ENCODE measurements at regions of chr4 and their contacts with region 1.

Region 1: GRCh38 chr4:70651864-70652506 is 14.3 kb downstream of the JCHAIN start:
- DNase-seq: no peak
- ATAC-seq: peak; percentile 67
- H3K4me3 Mint-ChIP-seq: no peak overlapping the region
- H3K27ac Mint-ChIP-seq: no peak overlapping the region
- H3K4me1 Mint-ChIP-seq: peaks cover 5% of the 10 kb centered on the region
- H3K27me3 Mint-ChIP-seq: no peaks in the 10 kb centered on the region
- CTCF ChIP-seq: no peak

Region 2: GRCh38 chr4:70704331-70705145 is 52.6 kb after region 1 on chr4:
- CTCF ChIA-PET with region 1: interaction called, 4 read pairs
- POLR2A ChIA-PET with region 1: interaction called, 4 read pairs
- intact Hi-C with region 1: loop called (anchors 1 kb)
- DNase-seq: peak; percentile 69
- ATAC-seq: peak; percentile 67
- H3K4me3 Mint-ChIP-seq: peak overlapping the region; percentile 93
- H3K27ac Mint-ChIP-seq: peak overlapping the region; percentile 89
- H3K4me1 Mint-ChIP-seq: peaks cover 34% of the 10 kb centered on the region
- H3K27me3 Mint-ChIP-seq: no peaks in the 10 kb centered on the region
- CTCF ChIP-seq: no peak

Region 3: GRCh38 chr4:70783096-70783495 is 131.1 kb after region 1 on chr4:
- CTCF ChIA-PET with region 1: no interaction called
- POLR2A ChIA-PET with region 1: no interaction called
- intact Hi-C with region 1: no loop called
- DNase-seq: no peak
- ATAC-seq: no peak
- H3K4me3 Mint-ChIP-seq: no peak overlapping the region
- H3K27ac Mint-ChIP-seq: no peak overlapping the region
- H3K4me1 Mint-ChIP-seq: no peaks in the 10 kb centered on the region
- H3K27me3 Mint-ChIP-seq: no peaks in the 10 kb centered on the region
- CTCF ChIP-seq: no peak

Region 4: DNA sequence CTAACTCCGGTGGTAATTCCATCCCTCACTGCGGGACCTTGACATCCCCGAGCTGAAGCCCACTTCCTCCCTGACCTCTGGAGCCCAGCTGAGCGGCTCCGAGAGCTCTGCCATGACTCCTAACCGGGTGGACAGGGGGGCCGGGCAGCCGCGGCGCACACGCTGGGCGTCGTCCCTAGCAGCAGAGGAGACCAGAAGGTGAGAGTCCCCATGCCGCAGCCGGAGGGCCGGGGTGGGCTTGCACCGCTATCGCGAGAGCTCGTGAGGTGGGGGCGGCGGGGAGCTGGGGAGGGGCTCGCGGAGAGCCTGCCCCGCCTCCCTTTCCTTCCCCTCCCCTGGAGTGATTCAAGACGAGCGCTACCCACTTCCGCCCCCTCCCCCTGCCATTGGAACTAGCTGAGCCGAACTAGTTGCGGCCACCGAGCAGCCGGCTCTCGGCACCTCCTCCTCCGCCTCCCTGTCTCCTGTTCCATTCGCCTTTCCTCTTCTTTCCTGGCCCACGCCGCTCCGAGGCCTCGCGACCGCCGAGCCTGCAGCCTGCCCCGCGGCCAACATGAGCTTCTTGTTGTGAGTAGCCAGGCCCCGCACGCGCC is 250.1 kb after region 1 on chr4 and contains the start of gene MOB1B:
- CTCF ChIA-PET with region 1: no interaction called
- POLR2A ChIA-PET with region 1: interaction called, 3 read pairs
- intact Hi-C with region 1: loop called (anchors 1 kb)
- DNase-seq: peak; percentile 73
- ATAC-seq: peak; percentile 96
- H3K4me3 Mint-ChIP-seq: peak within 1 kb of the TSS; percentile 98
- H3K27ac Mint-ChIP-seq: peak within 1 kb of the TSS; percentile 85
- H3K4me1 Mint-ChIP-seq: peaks cover 26% of the 10 kb centered on the region
- H3K27me3 Mint-ChIP-seq: no peaks in the 10 kb centered on the region
- CTCF ChIP-seq: no peak
- total RNA-seq, gene MOB1B: 22.2 and 23.4 TPM in 2 replicates

Region 5: DNA sequence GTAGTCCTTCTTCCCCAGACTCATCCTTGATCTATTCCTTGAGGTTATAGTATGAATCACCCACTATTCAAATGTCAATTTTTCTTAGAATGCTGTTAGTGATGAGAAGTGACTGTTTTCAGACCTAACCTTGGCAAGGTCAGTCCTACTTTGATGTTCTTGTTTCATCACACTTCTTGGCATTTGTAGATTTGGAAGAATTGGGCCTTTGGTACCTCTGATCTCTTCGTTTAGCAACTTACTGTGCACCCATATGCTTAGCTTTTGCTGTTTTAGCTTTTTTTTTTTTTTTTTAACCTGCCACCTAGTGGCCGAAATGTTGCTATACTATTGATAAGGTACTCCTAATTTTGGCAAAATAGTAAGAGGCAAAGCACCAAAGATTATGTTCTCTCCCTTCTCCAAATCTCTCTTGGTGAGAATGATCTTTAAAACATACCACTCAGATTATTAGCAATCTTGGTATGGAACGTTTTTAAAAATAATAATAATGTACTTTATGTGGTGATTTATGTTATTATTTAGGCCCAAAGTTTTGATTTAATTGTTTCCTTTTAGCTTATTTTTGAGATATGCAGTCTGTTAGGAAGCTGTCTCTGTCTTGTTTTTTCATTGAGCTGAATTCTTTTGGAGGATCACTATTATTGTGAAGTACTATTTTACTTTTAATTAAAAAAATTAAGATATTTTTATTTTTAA is 358.1 kb after region 1 on chr4:
- CTCF ChIA-PET with region 1: interaction called, 9 read pairs
- POLR2A ChIA-PET with region 1: interaction called, 5 read pairs
- intact Hi-C with region 1: loop called (anchors 1 kb)
- DNase-seq: no peak
- ATAC-seq: peak; percentile 46
- H3K4me3 Mint-ChIP-seq: peak overlapping the region; percentile 2
- H3K27ac Mint-ChIP-seq: peak overlapping the region; percentile 64
- H3K4me1 Mint-ChIP-seq: peaks cover 65% of the 10 kb centered on the region
- H3K27me3 Mint-ChIP-seq: no peaks in the 10 kb centered on the region
- CTCF ChIP-seq: peak; percentile 56

Region 6: GRCh38 chr4:71553605-71554004 is 901.6 kb after region 1 on chr4:
- CTCF ChIA-PET with region 1: no interaction called
- POLR2A ChIA-PET with region 1: no interaction called
- intact Hi-C with region 1: loop called (anchors 2 kb)
- DNase-seq: no peak
- ATAC-seq: no peak
- H3K4me3 Mint-ChIP-seq: no peak overlapping the region
- H3K27ac Mint-ChIP-seq: no peak overlapping the region
- H3K4me1 Mint-ChIP-seq: no peaks in the 10 kb centered on the region
- H3K27me3 Mint-ChIP-seq: peaks cover 2% of the 10 kb centered on the region
- CTCF ChIP-seq: no peak

Measured in activated B cell treated with CpG ODN at 0.5 μM for 24 hours (primary cell).